ENCODE measurements at regions of chr16 and their contacts with region 1.

Region 1: GRCh38 chr16:3171855-3172593 is 16.0 kb upstream of the OR1F1 start:
- DNase-seq: no peak
- H3K4me3 ChIP-seq: peak overlapping the region; percentile 53
- H3K4me3 Mint-ChIP-seq: peak overlapping the region; percentile 73 to 93 (median 81)
- H3K27ac ChIP-seq: no peak overlapping the region
- H3K27ac Mint-ChIP-seq: peak overlapping the region; percentile 69 to 90 (median 82)
- H3K4me1 ChIP-seq: peaks cover 35% of the 10 kb centered on the region
- H3K4me1 Mint-ChIP-seq: peaks cover 31 to 45% (median 43%) of the 10 kb centered on the region in 3 donors
- H3K27me3 ChIP-seq: peaks cover 42% of the 10 kb centered on the region
- H3K27me3 Mint-ChIP-seq: peaks cover 34 to 40% of the 10 kb centered on the region in 2 donors

Region 2: GRCh38 chr16:3143612-3144320 is 28.3 kb before region 1 on chr16:
- CTCF ChIA-PET with region 1: no interaction called
- POLR2A ChIA-PET with region 1: no interaction called
- DNase-seq: no peak
- H3K4me3 ChIP-seq: no peak overlapping the region
- H3K4me3 Mint-ChIP-seq: peak overlapping the region in 1 of 7 donors; percentile 18
- H3K27ac ChIP-seq: no peak overlapping the region
- H3K27ac Mint-ChIP-seq: no peak overlapping the region
- H3K4me1 ChIP-seq: no peaks in the 10 kb centered on the region
- H3K4me1 Mint-ChIP-seq: peaks cover 0 to 4% (median under 1%) of the 10 kb centered on the region in 3 donors
- H3K27me3 ChIP-seq: no peaks in the 10 kb centered on the region
- H3K27me3 Mint-ChIP-seq: no peaks in the 10 kb centered on the region

Region 3: DNA sequence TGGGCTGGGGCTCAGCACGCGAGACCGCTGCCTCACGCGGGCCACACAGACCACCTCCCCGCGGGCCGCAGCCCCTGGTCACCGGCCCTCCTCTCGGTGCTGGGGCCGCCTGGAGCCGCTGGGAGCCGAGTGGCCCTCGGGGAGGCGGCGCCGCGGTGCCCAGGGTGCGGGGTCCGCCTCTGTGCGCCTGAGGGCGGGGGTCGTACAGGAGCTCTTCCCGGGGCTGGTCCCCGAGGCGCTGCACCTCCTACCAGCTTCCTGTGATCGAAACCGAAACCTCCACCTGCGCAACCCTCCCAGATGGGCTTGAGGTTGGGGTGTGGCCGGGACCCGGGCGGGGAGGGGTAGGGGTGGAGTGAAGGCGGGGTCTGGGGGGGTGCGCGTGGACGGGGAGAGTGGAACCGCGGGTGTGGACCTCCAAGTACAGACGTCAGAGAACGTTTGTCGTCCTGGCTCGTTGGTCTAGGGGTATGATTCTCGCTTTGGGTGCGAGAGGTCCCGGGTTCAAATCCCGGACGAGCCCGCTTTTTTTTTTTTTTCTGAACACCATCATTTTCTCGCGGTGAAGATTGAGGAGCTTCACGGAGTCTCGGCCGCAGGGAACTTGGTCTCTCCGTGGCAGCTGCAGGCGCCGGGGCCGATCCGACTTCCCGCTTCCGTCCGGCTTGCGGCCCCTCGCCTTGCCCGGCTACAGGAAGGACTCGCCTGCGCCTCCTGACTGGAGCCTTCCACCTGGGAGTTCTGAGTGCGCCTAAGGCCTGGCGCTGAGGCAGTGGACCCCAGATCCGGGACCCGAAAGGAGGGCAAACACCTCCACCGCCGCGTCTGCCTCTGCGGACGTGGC is 13.3 kb before region 1 on chr16:
- CTCF ChIA-PET with region 1: interaction called, 5 read pairs
- POLR2A ChIA-PET with region 1: interaction called, 16 read pairs
- DNase-seq: peak; percentile 92 to 97 (median 93)
- H3K4me3 ChIP-seq: peak overlapping the region; percentile 87
- H3K4me3 Mint-ChIP-seq: peak overlapping the region; percentile 86 to 96 (median 91)
- H3K27ac ChIP-seq: peak overlapping the region; percentile 82
- H3K27ac Mint-ChIP-seq: peak overlapping the region; percentile 89 to 99 (median 96)
- H3K4me1 ChIP-seq: peaks cover 24% of the 10 kb centered on the region
- H3K4me1 Mint-ChIP-seq: peaks cover 21 to 32% (median 25%) of the 10 kb centered on the region in 3 donors
- H3K27me3 ChIP-seq: no peaks in the 10 kb centered on the region
- H3K27me3 Mint-ChIP-seq: peaks cover 0 to 16% of the 10 kb centered on the region in 2 donors